A549 (cell line): ENCODE measurements at regions of chr10 and their contacts with region 1.

Region 1: GRCh38 chr10:132023092-132023811 is 41.5 kb upstream of the BNIP3 start:
- DNase-seq: peak; percentile 83 to 85
- ATAC-seq: peak; percentile 87 to 95
- H3K4me3 ChIP-seq: peak overlapping the region; percentile 39
- H3K27ac ChIP-seq: peak overlapping the region; percentile 31 to 49; a peak in 5 of 6 replicates
- H3K4me1 ChIP-seq: peaks cover 5% of the 10 kb centered on the region; the same call in 1 of the 3 replicates
- CTCF ChIP-seq: peak; percentile 92
- EP300 ChIP-seq: no peak
- POLR2A ChIP-seq: no peak
- RAD21 ChIP-seq: peak; percentile 89 to 92

Region 2: DNA sequence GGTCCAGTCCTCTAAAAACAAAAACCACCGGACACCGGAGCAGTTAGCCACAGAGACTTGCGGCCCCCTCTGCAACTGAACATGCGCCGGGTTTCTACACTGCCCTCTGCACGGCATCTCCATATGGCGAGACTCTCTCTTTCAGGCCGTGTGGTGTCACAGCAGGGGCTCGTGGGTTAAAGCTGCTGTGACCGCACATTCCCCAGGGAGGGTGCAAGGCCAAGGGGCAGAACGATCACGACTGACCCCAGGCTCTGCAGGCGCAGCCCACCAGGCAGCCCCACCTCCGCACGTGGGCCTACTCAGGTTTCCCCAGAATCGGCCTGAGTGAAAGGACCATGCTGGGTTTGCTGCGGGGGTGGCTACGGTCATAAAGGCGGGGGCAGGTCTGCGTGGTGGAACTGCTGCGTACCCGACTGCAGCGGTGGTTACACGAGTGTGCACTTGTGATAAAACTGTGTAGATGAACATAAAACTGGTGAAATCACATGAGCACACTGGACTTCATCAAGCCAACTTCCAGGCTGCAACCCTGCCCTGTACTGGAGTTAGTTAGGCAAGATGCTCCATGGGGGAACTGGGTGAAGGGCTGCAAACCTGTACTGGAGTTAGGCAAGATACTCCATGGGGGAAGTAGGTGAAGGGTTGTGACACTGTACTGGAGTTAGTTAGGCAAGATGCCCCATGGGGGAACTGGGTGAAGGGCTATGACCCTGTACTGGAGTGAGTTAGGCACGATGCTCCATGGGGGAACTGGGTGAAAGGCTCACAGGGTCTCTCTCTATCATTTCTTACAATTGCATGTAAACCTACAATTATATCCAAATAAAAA is 203.8 kb before region 1 on chr10:
- CTCF ChIA-PET with region 1: no interaction called
- POLR2A ChIA-PET with region 1: no interaction called
- DNase-seq: no peak
- ATAC-seq: peak in 1 of 2 experiments; percentile 16; a peak in 2 of 6 replicates
- H3K4me3 ChIP-seq: no peak overlapping the region
- H3K27ac ChIP-seq: no peak overlapping the region
- H3K4me1 ChIP-seq: peaks cover 2% of the 10 kb centered on the region; the same call in 2 of the 3 replicates
- CTCF ChIP-seq: no peak
- EP300 ChIP-seq: no peak
- POLR2A ChIP-seq: no peak
- RAD21 ChIP-seq: no peak

Region 3: GRCh38 chr10:131900350-131901146 is 122.7 kb before region 1 on chr10 and contains the start of gene PPP2R2D:
- CTCF ChIA-PET with region 1: interaction called, 24 read pairs
- POLR2A ChIA-PET with region 1: no interaction called
- DNase-seq: peak; percentile 92 to 93
- ATAC-seq: peak; percentile 89 to 97
- H3K4me3 ChIP-seq: peak within 1 kb of the TSS; percentile 98
- H3K27ac ChIP-seq: peak within 1 kb of the TSS; percentile 97 to 98
- H3K4me1 ChIP-seq: peaks cover 38% of the 10 kb centered on the region
- CTCF ChIP-seq: no peak
- EP300 ChIP-seq: no peak
- POLR2A ChIP-seq: peak; percentile 44
- RAD21 ChIP-seq: no peak
- polyA plus RNA-seq, gene PPP2R2D: 31.1 and 36.0 TPM in 2 replicates

Region 4: DNA sequence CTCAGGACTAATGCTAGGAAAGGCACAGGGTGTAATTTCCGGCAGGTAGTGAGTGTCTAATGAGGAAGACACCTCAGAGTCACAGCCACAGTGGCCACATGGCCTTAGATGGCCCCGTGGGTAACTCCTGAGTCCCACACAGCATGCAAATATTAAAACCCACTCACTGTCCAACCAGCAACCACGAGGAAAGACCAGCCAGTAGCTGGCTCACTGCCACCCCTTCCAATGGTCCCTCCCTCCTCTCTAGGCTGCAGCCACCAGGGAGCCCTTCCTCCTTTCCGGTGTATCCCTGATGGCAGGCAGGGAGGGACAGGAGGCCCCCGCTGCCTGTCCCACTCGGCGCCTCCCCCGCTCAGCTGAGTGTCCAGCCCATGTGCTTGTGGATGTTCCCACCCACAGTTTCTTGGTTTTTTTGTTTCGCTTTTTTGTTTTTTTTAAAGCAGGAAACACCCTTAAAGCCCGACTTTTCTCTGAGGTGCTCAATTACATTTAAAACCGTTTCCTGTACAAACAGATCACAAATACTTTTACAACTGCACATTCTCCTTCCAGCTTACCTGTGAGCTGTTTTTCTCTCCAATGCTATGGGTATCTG is 50.7 kb before region 1 on chr10:
- CTCF ChIA-PET with region 1: interaction called, 13 read pairs
- POLR2A ChIA-PET with region 1: no interaction called
- DNase-seq: no peak
- ATAC-seq: peak; percentile 32 to 62; a peak in 4 of 6 replicates
- H3K4me3 ChIP-seq: no peak overlapping the region
- H3K27ac ChIP-seq: no peak overlapping the region
- H3K4me1 ChIP-seq: peaks cover 2% of the 10 kb centered on the region; the same call in 1 of the 3 replicates
- CTCF ChIP-seq: no peak
- EP300 ChIP-seq: no peak
- POLR2A ChIP-seq: no peak
- RAD21 ChIP-seq: no peak

Region 5: GRCh38 chr10:132011024-132011423 is 12.2 kb before region 1 on chr10:
- CTCF ChIA-PET with region 1: interaction called, 22 read pairs
- POLR2A ChIA-PET with region 1: no interaction called
- DNase-seq: no peak
- ATAC-seq: no peak
- H3K4me3 ChIP-seq: no peak overlapping the region
- H3K27ac ChIP-seq: no peak overlapping the region
- H3K4me1 ChIP-seq: no peaks in the 10 kb centered on the region
- CTCF ChIP-seq: no peak
- EP300 ChIP-seq: no peak
- POLR2A ChIP-seq: no peak
- RAD21 ChIP-seq: no peak

Region 6: DNA sequence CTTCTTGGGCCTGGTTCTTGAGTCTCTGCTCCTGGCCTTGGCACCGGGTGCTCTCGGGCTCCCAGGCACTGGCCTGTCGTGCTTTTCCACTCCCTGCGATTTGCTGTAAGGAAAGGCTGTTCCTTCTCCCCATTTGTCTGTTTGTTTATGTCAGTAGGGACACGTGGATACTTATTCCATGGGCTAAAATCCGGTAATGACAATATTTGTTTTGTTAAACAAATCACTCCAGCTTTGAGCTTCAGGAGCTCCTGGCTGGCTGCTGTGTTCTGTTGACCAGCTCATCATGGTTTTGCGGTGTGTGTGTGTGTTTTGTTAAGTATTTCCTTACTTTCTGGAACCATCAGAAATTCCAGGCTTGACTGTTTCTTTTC is 25.0 kb after region 1 on chr10:
- CTCF ChIA-PET with region 1: interaction called, 24 read pairs
- POLR2A ChIA-PET with region 1: no interaction called
- DNase-seq: peak in 1 of 2 experiments; percentile 33
- ATAC-seq: peak; percentile 12 to 18; a peak in 2 of 6 replicates
- H3K4me3 ChIP-seq: no peak overlapping the region
- H3K27ac ChIP-seq: no peak overlapping the region
- H3K4me1 ChIP-seq: no peaks in the 10 kb centered on the region
- CTCF ChIP-seq: no peak
- EP300 ChIP-seq: no peak
- POLR2A ChIP-seq: no peak
- RAD21 ChIP-seq: no peak